ENCODE measurements at regions of chr17 and their contacts with region 1.

Region 1: DNA sequence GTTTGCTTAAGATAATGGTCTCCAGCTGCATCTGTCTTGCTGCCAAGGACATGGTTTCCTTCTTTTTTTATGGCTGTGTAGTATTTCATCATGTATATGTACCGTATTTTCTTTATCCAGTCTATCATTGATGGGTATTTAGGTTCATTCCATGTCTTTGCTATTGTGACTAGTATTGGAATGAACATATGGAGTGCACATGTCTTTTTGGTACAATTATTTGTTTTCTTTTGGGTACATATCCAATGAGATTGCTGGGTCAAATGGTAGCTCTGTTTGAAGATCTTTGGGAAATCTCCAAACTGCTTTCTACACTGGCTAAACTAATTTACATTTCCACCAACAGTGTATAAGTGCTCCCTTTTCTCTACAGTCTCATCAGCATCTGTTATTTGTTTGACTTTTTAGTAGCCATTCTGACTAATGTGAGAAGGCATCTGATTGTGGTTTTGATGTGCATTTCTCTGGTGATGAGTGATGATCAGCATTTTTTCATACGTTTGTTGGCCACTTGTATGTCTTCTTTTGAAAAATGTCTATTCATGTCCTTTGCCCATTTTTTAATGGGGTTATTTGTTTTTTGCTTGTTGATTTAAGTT is 66.2 kb downstream of the TNFRSF13B start:
- DNase-seq: no peak
- ATAC-seq: peak; percentile 21
- H3K4me3 Mint-ChIP-seq: no peak overlapping the region
- H3K27ac Mint-ChIP-seq: no peak overlapping the region
- H3K4me1 Mint-ChIP-seq: peaks cover 38% of the 10 kb centered on the region
- H3K27me3 Mint-ChIP-seq: peaks cover 30% of the 10 kb centered on the region

Region 2: GRCh38 chr17:16068323-16068722 is 837.4 kb before region 1 on chr17:
- CTCF ChIA-PET with region 1: no interaction called
- POLR2A ChIA-PET with region 1: interaction called, 15 read pairs
- intact Hi-C with region 1: no loop called
- DNase-seq: no peak
- ATAC-seq: no peak
- H3K4me3 Mint-ChIP-seq: no peak overlapping the region
- H3K27ac Mint-ChIP-seq: no peak overlapping the region
- H3K4me1 Mint-ChIP-seq: peaks cover 9% of the 10 kb centered on the region
- H3K27me3 Mint-ChIP-seq: no peaks in the 10 kb centered on the region

Region 3: DNA sequence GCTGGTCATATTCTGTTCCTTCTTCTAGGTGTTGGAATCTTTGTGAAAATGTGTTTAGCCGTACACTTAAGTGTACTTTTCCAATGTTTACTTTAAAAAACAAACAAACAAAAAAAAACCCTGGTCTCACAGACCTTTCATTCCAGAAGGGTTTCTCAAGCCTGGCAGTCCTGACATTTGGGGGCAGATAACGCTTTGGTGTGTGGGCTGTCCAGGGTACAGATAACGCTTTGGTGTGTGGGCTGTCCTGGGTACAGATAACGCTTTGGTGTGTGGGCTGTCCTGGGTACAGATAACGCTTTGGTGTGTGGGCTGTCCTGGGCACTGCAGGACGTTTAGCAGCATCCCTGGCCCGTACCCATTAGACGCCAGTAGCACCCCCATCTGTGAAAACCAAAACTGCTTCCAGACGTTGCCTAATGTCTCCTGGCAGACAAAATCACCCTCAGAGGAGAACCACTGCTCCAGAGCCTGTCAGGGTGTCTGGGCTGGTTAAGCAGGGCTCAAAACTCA is 346.5 kb after region 1 on chr17:
- CTCF ChIA-PET with region 1: no interaction called
- POLR2A ChIA-PET with region 1: no interaction called
- intact Hi-C with region 1: no loop called
- DNase-seq: no peak
- ATAC-seq: no peak
- H3K4me3 Mint-ChIP-seq: no peak overlapping the region
- H3K27ac Mint-ChIP-seq: no peak overlapping the region
- H3K4me1 Mint-ChIP-seq: peaks cover 3% of the 10 kb centered on the region
- H3K27me3 Mint-ChIP-seq: no peaks in the 10 kb centered on the region